ENCODE measurements at regions of chr1 and their contacts with region 1.

Region 1: GRCh38 chr1:7646981-7647901 is 123.9 kb upstream of the VAMP3 start:
- DNase-seq: peak; percentile 68
- H3K4me3 ChIP-seq: no peak overlapping the region
- H3K27ac ChIP-seq: no peak overlapping the region
- H3K4me1 ChIP-seq: peaks cover 8% of the 10 kb centered on the region
- H3K27me3 ChIP-seq: no peaks in the 10 kb centered on the region
- CTCF ChIP-seq: peak; percentile 98

Region 2: GRCh38 chr1:6727535-6727934 is 919.7 kb before region 1 on chr1:
- CTCF ChIA-PET with region 1: no interaction called
- POLR2A ChIA-PET with region 1: no interaction called
- intact Hi-C with region 1: loop called (anchors 5 kb)
- DNase-seq: peak; percentile 76
- H3K4me3 ChIP-seq: no peak overlapping the region
- H3K27ac ChIP-seq: no peak overlapping the region
- H3K4me1 ChIP-seq: no peaks in the 10 kb centered on the region
- H3K27me3 ChIP-seq: peaks cover 11% of the 10 kb centered on the region
- CTCF ChIP-seq: peak; percentile 96

Region 3: GRCh38 chr1:6794164-6794563 is 853.1 kb before region 1 on chr1:
- CTCF ChIA-PET with region 1: no interaction called
- POLR2A ChIA-PET with region 1: no interaction called
- intact Hi-C with region 1: loop called (anchors 5 kb)
- DNase-seq: peak; percentile 55
- H3K4me3 ChIP-seq: no peak overlapping the region
- H3K27ac ChIP-seq: no peak overlapping the region
- H3K4me1 ChIP-seq: peaks cover 6% of the 10 kb centered on the region
- H3K27me3 ChIP-seq: no peaks in the 10 kb centered on the region
- CTCF ChIP-seq: peak; percentile 55; the same call in 1 of the 2 replicates

Region 4: DNA sequence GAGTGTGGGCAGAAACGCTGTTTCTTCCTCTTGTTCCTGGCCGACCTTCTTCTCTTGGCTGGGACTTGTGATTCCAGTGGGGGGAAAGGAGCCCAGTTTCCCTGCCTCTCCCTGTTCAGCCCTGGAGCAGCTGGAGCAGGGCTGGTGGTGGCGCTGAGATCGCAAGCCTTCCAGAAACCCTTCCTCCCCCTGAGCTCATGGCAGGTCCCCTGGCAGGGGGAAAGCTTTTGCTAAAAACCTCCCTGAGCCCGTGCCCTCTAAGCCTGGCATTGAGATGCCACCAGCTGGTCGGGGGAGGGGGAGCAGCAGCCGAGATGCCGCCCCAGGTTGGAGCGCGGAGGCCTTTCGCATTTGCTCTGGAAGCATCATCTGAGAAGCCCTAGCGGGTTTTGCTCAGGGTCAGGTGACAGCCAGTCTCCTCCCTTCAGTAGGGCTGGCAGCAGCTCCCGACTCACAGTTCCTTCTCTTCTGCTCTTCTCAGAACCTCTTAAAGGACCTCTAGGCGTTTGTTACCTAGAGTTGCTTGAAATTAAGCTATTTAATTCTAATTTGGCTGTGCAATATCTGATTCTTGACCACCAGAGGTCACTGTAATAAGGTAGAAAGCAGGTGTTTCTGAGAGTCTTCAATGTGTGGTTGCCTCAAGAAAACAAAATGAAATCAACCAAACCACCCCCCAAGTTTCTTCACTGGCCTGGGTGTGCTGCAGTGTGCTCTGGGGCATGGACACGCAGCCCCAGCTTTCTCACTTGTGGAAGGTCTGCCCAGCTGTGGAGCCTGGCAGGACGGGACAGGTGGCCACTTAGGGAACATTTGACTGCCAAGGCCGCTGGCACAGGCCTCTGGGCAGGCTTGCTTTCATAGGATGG is 604.7 kb before region 1 on chr1:
- CTCF ChIA-PET with region 1: interaction called, 5 read pairs
- POLR2A ChIA-PET with region 1: no interaction called
- intact Hi-C with region 1: loop called (anchors 5 kb)
- DNase-seq: peak; percentile 41
- H3K4me3 ChIP-seq: no peak overlapping the region
- H3K27ac ChIP-seq: no peak overlapping the region
- H3K4me1 ChIP-seq: peaks cover 4% of the 10 kb centered on the region
- H3K27me3 ChIP-seq: peaks cover 26% of the 10 kb centered on the region
- CTCF ChIP-seq: peak; percentile 67

Region 5: GRCh38 chr1:7218210-7218832 is 428.9 kb before region 1 on chr1:
- CTCF ChIA-PET with region 1: no interaction called
- POLR2A ChIA-PET with region 1: no interaction called
- intact Hi-C with region 1: loop called (anchors 5 kb)
- DNase-seq: peak; percentile 67
- H3K4me3 ChIP-seq: no peak overlapping the region
- H3K27ac ChIP-seq: no peak overlapping the region
- H3K4me1 ChIP-seq: peaks cover 2% of the 10 kb centered on the region
- H3K27me3 ChIP-seq: no peaks in the 10 kb centered on the region
- CTCF ChIP-seq: peak; percentile 82

Region 6: GRCh38 chr1:7299329-7299799 is 347.9 kb before region 1 on chr1:
- CTCF ChIA-PET with region 1: no interaction called
- POLR2A ChIA-PET with region 1: no interaction called
- intact Hi-C with region 1: loop called (anchors 10 kb)
- DNase-seq: peak; percentile 94
- H3K4me3 ChIP-seq: no peak overlapping the region
- H3K27ac ChIP-seq: peak overlapping the region; percentile 71
- H3K4me1 ChIP-seq: peaks cover 54% of the 10 kb centered on the region
- H3K27me3 ChIP-seq: no peaks in the 10 kb centered on the region
- CTCF ChIP-seq: no peak

Region 7: DNA sequence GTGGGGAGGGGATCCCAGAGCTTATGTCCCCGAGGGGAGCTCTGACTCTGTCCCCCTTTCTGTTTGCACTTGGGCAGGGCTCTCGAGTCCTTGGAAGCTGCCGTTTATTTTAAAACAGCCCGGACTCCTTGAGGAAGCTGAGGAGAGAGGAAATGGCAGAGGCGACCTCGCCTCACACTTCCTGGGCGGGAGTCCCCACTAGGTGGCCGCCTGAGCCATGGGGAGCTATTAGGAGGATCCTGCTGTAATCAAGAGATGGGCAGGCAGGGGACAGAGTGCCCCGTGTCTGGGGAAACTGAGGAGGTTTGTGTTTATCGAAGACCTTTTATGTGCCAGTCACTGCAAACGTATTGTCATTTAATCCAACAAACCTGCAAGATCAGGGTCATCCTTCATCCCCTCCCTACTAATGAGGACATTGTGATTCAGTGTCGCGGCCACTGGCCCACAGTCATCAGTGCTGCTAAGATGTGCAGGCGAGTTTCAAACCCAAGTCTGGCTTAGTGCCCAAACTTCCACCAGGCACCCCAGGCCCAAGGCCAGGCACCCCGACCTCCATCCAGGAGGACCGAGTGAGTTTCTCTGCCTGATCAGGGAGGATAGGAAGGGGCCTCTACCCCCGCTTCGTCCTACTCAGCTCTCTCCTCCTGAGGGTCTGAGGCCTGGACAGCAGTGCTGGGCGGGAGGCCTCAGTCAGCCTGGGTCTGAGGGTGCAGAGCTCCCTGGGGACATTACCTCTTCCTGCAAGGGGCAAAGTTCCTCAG is 193.0 kb before region 1 on chr1:
- CTCF ChIA-PET with region 1: interaction called, 14 read pairs
- POLR2A ChIA-PET with region 1: no interaction called
- intact Hi-C with region 1: loop called (anchors 2 kb)
- DNase-seq: peak; percentile 52
- H3K4me3 ChIP-seq: no peak overlapping the region
- H3K27ac ChIP-seq: no peak overlapping the region
- H3K4me1 ChIP-seq: no peaks in the 10 kb centered on the region
- H3K27me3 ChIP-seq: no peaks in the 10 kb centered on the region
- CTCF ChIP-seq: peak; percentile 69

Measured in A673 (cell line).